Caco-2 (cell line): ENCODE measurements at regions of chr12 and their contacts with region 1.

Region 1: DNA sequence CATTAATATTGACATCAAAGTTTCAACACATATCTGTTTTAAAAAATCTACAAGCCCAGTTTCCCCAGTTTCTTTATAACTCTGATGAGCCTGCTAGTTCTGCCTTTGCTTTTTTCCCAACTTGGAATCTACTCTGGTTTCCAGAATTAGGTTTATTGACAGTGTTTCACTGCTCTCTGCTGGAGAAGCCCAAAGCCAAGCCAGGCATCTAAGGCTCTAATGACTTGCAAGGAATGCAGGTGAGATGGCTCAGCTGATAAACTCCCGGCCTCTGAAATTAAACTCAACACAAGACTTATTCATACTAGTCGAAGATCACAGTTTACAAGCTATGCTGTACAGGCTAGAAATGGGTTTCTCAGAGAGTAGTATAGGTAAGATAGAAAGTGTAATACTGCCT is 54.3 kb downstream of the HMGA2 start:
- DNase-seq: peak; percentile 73 to 77
- H3K4me3 ChIP-seq: no peak overlapping the region
- H3K4me3 Mint-ChIP-seq: peak overlapping the region; percentile 42
- H3K27ac Mint-ChIP-seq: peak overlapping the region; percentile 69
- H3K4me1 ChIP-seq: peaks cover 51% of the 10 kb centered on the region
- H3K4me1 Mint-ChIP-seq: peaks cover 34% of the 10 kb centered on the region
- H3K27me3 ChIP-seq: no peaks in the 10 kb centered on the region
- H3K27me3 Mint-ChIP-seq: no peaks in the 10 kb centered on the region
- CTCF ChIP-seq: peak; percentile 31 to 62

Region 2: GRCh38 chr12:65306366-65307168 is 572.0 kb before region 1 on chr12:
- CTCF ChIA-PET with region 1: interaction called, 6 read pairs
- POLR2A ChIA-PET with region 1: no interaction called
- intact Hi-C with region 1: loop called (anchors 2 kb)
- DNase-seq: peak in 1 of 2 experiments; percentile 52
- H3K4me3 ChIP-seq: peak overlapping the region; percentile 12; the same call in 1 of the 2 replicates
- H3K4me3 Mint-ChIP-seq: peak overlapping the region; percentile 67
- H3K27ac Mint-ChIP-seq: peak overlapping the region; percentile 55
- H3K4me1 ChIP-seq: peaks cover 5% of the 10 kb centered on the region
- H3K4me1 Mint-ChIP-seq: peaks cover 10% of the 10 kb centered on the region
- H3K27me3 ChIP-seq: no peaks in the 10 kb centered on the region
- H3K27me3 Mint-ChIP-seq: no peaks in the 10 kb centered on the region
- CTCF ChIP-seq: peak; percentile 53 to 75

Region 3: GRCh38 chr12:65602610-65603295 is 275.8 kb before region 1 on chr12:
- CTCF ChIA-PET with region 1: interaction called, 7 read pairs
- POLR2A ChIA-PET with region 1: no interaction called
- intact Hi-C with region 1: loop called (anchors 1 kb)
- DNase-seq: peak; percentile 67
- H3K4me3 ChIP-seq: no peak overlapping the region
- H3K4me3 Mint-ChIP-seq: no peak overlapping the region
- H3K27ac Mint-ChIP-seq: no peak overlapping the region
- H3K4me1 ChIP-seq: peaks cover 19% of the 10 kb centered on the region
- H3K4me1 Mint-ChIP-seq: peaks cover 24% of the 10 kb centered on the region
- H3K27me3 ChIP-seq: no peaks in the 10 kb centered on the region
- H3K27me3 Mint-ChIP-seq: no peaks in the 10 kb centered on the region
- CTCF ChIP-seq: peak; percentile 65 to 67

Region 4: GRCh38 chr12:65740873-65741600 is 137.5 kb before region 1 on chr12:
- CTCF ChIA-PET with region 1: no interaction called
- POLR2A ChIA-PET with region 1: no interaction called
- intact Hi-C with region 1: loop called (anchors 5 kb)
- DNase-seq: peak; percentile 86 to 90
- H3K4me3 ChIP-seq: peak overlapping the region; percentile 83
- H3K4me3 Mint-ChIP-seq: peak overlapping the region; percentile 94
- H3K27ac Mint-ChIP-seq: no peak overlapping the region
- H3K4me1 ChIP-seq: 0 out of 2 replicates have a peak, but pooled peaks cover 4% of the 10 kb centered on the region
- H3K4me1 Mint-ChIP-seq: peaks cover 9% of the 10 kb centered on the region
- H3K27me3 ChIP-seq: no peaks in the 10 kb centered on the region
- H3K27me3 Mint-ChIP-seq: no peaks in the 10 kb centered on the region
- CTCF ChIP-seq: no peak

Region 5: DNA sequence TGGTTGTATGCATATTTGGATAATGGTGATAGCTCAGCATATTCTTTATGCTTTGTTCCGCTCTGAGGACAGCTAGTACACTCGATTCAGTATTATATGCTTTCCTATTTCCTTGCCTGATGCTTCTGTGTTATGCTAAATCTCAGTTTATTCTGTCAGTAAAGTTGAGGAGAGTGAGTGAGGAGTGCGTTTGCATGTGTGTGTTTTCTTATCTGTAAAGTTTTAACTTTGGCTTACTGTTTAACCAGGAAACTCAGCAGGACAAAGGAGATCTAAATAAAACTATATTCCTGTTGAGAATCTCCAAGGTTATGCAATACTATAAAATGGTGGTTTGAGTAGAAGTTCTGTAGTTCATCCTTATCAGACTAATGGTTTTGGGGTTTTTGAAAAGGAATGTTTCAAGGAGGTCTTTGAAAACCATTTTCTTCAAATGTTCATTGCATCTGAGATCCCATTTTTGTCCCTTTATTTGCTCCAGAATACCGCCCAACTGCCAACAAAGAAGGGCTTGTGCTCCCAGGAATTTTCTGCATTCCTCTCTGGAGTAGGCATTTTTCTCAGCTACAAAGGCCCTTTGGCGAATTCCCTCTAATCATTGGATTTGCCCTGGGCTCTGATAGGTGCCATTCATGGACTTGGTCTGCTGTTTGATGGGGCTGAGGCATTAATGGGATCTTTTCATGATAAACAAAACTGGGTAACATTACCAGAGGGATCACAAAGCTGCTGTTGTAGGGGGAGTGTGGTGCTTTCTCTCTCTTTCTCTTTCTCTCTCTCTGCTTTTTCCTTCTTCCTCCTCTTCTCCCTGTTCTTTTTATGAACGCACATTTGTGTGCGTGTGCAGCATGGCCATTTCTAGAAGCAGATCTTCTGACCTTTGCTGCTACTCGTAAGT is 17.5 kb after region 1 on chr12:
- CTCF ChIA-PET with region 1: no interaction called
- POLR2A ChIA-PET with region 1: no interaction called
- intact Hi-C with region 1: loop called (anchors 1 kb)
- DNase-seq: peak; percentile 64 to 80
- H3K4me3 ChIP-seq: peak overlapping the region; percentile 16; the same call in 1 of the 2 replicates
- H3K4me3 Mint-ChIP-seq: peak overlapping the region; percentile 69
- H3K27ac Mint-ChIP-seq: peak overlapping the region; percentile 85
- H3K4me1 ChIP-seq: peaks cover 64% of the 10 kb centered on the region
- H3K4me1 Mint-ChIP-seq: peaks cover 68% of the 10 kb centered on the region
- H3K27me3 ChIP-seq: no peaks in the 10 kb centered on the region
- H3K27me3 Mint-ChIP-seq: no peaks in the 10 kb centered on the region
- CTCF ChIP-seq: no peak

Region 6: GRCh38 chr12:66047411-66048021 is 169.0 kb after region 1 on chr12:
- CTCF ChIA-PET with region 1: no interaction called
- POLR2A ChIA-PET with region 1: no interaction called
- intact Hi-C with region 1: loop called (anchors 1 kb)
- DNase-seq: no peak
- H3K4me3 ChIP-seq: no peak overlapping the region
- H3K4me3 Mint-ChIP-seq: no peak overlapping the region
- H3K27ac Mint-ChIP-seq: no peak overlapping the region
- H3K4me1 ChIP-seq: peaks cover 41% of the 10 kb centered on the region
- H3K4me1 Mint-ChIP-seq: peaks cover 10% of the 10 kb centered on the region
- H3K27me3 ChIP-seq: no peaks in the 10 kb centered on the region
- H3K27me3 Mint-ChIP-seq: no peaks in the 10 kb centered on the region
- CTCF ChIP-seq: no peak

Region 7: GRCh38 chr12:66107451-66107915 is 228.9 kb after region 1 on chr12:
- CTCF ChIA-PET with region 1: no interaction called
- POLR2A ChIA-PET with region 1: no interaction called
- intact Hi-C with region 1: loop called (anchors 1 kb)
- DNase-seq: peak; percentile 79 to 92
- H3K4me3 ChIP-seq: no peak overlapping the region
- H3K4me3 Mint-ChIP-seq: peak overlapping the region; percentile 47
- H3K27ac Mint-ChIP-seq: no peak overlapping the region
- H3K4me1 ChIP-seq: peaks cover 7% of the 10 kb centered on the region; the same call in 1 of the 2 replicates
- H3K4me1 Mint-ChIP-seq: peaks cover 15% of the 10 kb centered on the region
- H3K27me3 ChIP-seq: no peaks in the 10 kb centered on the region
- H3K27me3 Mint-ChIP-seq: no peaks in the 10 kb centered on the region
- CTCF ChIP-seq: peak; percentile 61 to 80